HepG2 (cell line): ENCODE measurements at regions of chr19 and their contacts with region 1.

Region 1: GRCh38 chr19:44943801-44944249 is 1.8 kb downstream of the APOC4 start:
- DNase-seq: no peak
- ATAC-seq: peak; percentile 25; the same call in 2 of the 3 replicates
- H3K4me3 ChIP-seq: no peak overlapping the region
- H3K27ac ChIP-seq: peak overlapping the region; percentile 89
- H3K4me1 ChIP-seq: peaks cover 85% of the 10 kb centered on the region
- H3K27me3 ChIP-seq: no peaks in the 10 kb centered on the region; a peak in 1 of 5 replicates
- CTCF ChIP-seq: no peak
- EP300 ChIP-seq: no peak
- POLR2A ChIP-seq: no peak
- RAD21 ChIP-seq: no peak

Region 2: DNA sequence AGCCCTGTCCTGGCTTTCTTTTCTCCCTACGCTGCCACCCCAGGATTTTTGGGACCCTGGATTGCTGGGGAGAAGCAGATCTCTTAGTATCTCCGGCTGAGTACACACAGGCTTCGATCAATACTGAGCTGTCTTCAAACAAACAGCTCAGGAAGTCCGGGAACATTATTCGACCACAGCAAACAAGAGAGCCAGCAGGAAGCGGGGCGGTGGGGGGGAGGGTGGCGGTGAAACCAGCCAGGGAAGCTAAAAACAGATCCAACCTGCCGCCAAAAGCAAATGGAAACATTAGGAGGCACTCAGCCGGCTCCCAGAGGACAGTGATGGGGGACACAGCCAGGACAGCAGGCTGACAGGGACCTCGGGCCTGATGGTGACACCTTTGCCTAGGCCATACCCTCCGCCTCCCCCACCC is 147.1 kb before region 1 on chr19:
- CTCF ChIA-PET with region 1: no interaction called
- POLR2A ChIA-PET with region 1: no interaction called
- in situ Hi-C with region 1: no loop called
- intact Hi-C with region 1: no loop called
- DNase-seq: peak; percentile 96
- ATAC-seq: peak; percentile 76
- H3K4me3 ChIP-seq: peak overlapping the region in 2 of 3 experiments; percentile 18 to 44; a peak in 2 of 6 replicates
- H3K27ac ChIP-seq: peak overlapping the region; percentile 85
- H3K4me1 ChIP-seq: peaks cover 82% of the 10 kb centered on the region
- H3K27me3 ChIP-seq: no peaks in the 10 kb centered on the region
- CTCF ChIP-seq: peak; percentile 25; the same call in 1 of the 2 replicates
- EP300 ChIP-seq: peak in 1 of 2 experiments; percentile 90; a peak in 2 of 4 replicates
- POLR2A ChIP-seq: 0 out of 4 replicates have a peak, but pooled peaks of 1 of the 2 experiments have one; percentile 27
- RAD21 ChIP-seq: no peak

Region 3: GRCh38 chr19:44903602-44904425 is 40.0 kb before region 1 on chr19:
- CTCF ChIA-PET with region 1: no interaction called
- POLR2A ChIA-PET with region 1: interaction called, 92 read pairs
- in situ Hi-C with region 1: no loop called
- intact Hi-C with region 1: no loop called
- DNase-seq: peak; percentile 80
- ATAC-seq: peak; percentile 50
- H3K4me3 ChIP-seq: peak overlapping the region; percentile 7 to 93 (median 7); a peak in 4 of 6 replicates
- H3K27ac ChIP-seq: peak overlapping the region; percentile 90
- H3K4me1 ChIP-seq: peaks cover 45% of the 10 kb centered on the region
- H3K27me3 ChIP-seq: no peaks in the 10 kb centered on the region; a peak in 1 of 5 replicates
- CTCF ChIP-seq: peak; percentile 98
- EP300 ChIP-seq: peak in 1 of 2 experiments; percentile 53; a peak in 1 of 4 replicates
- POLR2A ChIP-seq: peak; percentile 32 to 62
- RAD21 ChIP-seq: peak; percentile 95

Region 4: GRCh38 chr19:44912854-44913253 is 31.0 kb before region 1 on chr19:
- CTCF ChIA-PET with region 1: interaction called, 4 read pairs
- POLR2A ChIA-PET with region 1: interaction called, 92 read pairs
- in situ Hi-C with region 1: loop called (anchors 5 kb)
- intact Hi-C with region 1: no loop called
- DNase-seq: peak; percentile 72
- ATAC-seq: peak; percentile 16
- H3K4me3 ChIP-seq: peak overlapping the region in 1 of 3 experiments; percentile 77; a peak in 2 of 6 replicates
- H3K27ac ChIP-seq: peak overlapping the region; percentile 88
- H3K4me1 ChIP-seq: peaks cover 66% of the 10 kb centered on the region
- H3K27me3 ChIP-seq: no peaks in the 10 kb centered on the region
- CTCF ChIP-seq: no peak
- EP300 ChIP-seq: peak in 1 of 2 experiments; percentile 79; a peak in 2 of 4 replicates
- POLR2A ChIP-seq: 0 out of 4 replicates have a peak, but pooled peaks of 1 of the 2 experiments have one; percentile 31
- RAD21 ChIP-seq: peak; percentile 40

Region 5: GRCh38 chr19:44925114-44925891 is 18.5 kb before region 1 on chr19:
- CTCF ChIA-PET with region 1: no interaction called
- POLR2A ChIA-PET with region 1: interaction called, 87 read pairs
- in situ Hi-C with region 1: no loop called
- intact Hi-C with region 1: no loop called
- DNase-seq: peak; percentile 95
- ATAC-seq: peak; percentile 64
- H3K4me3 ChIP-seq: peak overlapping the region in 1 of 3 experiments; percentile 50; a peak in 2 of 6 replicates
- H3K27ac ChIP-seq: peak overlapping the region; percentile 96
- H3K4me1 ChIP-seq: peaks cover 93% of the 10 kb centered on the region
- H3K27me3 ChIP-seq: no peaks in the 10 kb centered on the region
- CTCF ChIP-seq: peak; percentile 43
- EP300 ChIP-seq: peak; percentile 88 to 97
- POLR2A ChIP-seq: peak in 1 of 2 experiments; percentile 16; a peak in 1 of 4 replicates
- RAD21 ChIP-seq: peak; percentile 55